T-cell (primary cell): ENCODE measurements at regions of chr7 and their contacts with region 1.

Region 1: DNA sequence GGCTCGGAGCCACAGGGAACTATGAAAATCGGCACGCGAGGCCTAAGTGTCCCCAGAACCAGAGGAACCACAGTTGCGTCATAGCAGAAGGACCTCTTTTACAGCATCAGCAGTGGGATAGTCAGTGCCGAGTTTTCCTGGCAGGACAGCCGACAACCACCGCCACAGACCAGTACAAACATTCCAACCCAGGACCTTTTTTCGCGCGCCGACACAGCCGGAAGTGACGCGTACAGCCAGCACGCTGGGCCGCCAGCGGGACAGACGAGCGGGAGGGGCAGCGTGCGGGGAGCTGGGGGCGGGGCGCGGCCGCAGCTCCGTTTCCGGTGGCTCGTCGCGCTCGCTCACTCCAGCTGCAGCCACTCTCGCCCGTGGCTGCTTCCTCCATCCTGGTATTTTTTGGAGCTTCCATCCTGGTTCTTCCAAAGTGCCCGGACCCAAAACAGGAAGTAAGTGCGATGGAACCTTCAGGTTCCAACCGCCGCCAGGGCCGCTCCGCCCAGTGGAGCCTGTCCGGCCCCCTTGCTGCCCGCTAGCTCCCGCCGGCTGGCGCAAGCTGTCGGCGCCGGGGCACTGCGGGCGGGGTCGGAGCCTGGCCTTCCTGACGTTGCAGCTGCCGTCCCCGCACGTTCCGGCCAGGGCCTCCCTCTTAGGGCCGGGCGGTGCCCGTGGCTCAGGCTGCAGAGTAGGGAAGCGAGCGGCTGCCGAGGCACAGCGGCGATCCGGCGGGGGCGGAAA is at the start of gene DMTF1:
- DNase-seq: peak; percentile 63 to 92 (median 81)
- ATAC-seq: peak; percentile 83 to 88 (median 84)
- H3K4me3 ChIP-seq: peak within 1 kb of the TSS; percentile 81 to 94
- H3K4me3 Mint-ChIP-seq: peak within 1 kb of the TSS; percentile 85 to 97 (median 92)
- H3K27ac ChIP-seq: peak within 1 kb of the TSS; percentile 90
- H3K27ac Mint-ChIP-seq: peak within 1 kb of the TSS; percentile 93 to 98
- H3K4me1 ChIP-seq: peaks cover 10 to 29% of the 10 kb centered on the region in 2 experiments
- H3K4me1 Mint-ChIP-seq: peaks cover 50 to 51% (median 50%) of the 10 kb centered on the region in 3 donors
- H3K27me3 ChIP-seq: no peaks in the 10 kb centered on the region
- H3K27me3 Mint-ChIP-seq: no peaks in the 10 kb centered on the region
- total RNA-seq, gene DMTF1: 128 to 176 (median 136) TPM

Region 2: DNA sequence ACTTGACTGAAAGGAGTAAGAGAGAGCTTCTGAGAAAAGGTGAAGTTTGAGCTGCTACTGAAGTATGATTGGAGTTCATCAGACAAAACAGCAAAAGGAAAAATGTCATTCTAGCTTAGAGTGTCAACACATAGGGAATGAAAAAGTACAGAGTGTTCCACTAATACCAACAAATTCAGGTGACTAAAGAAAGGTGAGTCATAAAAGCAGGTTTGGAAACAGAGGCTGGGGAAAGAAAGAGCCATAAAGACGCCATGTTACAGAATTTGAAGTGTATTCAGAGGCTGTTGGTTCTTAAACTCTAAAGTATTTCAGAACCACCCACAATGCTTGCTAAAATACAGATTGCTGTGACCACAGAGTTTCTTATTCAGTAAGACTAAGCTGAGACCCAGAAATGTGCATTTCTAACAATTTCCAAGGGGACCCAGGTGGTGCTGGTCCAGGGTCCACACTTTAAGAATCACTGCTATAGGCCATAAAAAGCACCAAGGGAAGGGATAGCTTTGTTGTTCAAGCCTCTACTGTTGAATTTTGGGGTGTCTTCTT is 235.9 kb before region 1 on chr7:
- CTCF ChIA-PET with region 1: interaction called in 1 of 2 experiments, 12 read pairs
- POLR2A ChIA-PET with region 1: no interaction called
- DNase-seq: no peak
- ATAC-seq: no peak
- H3K4me3 ChIP-seq: no peak overlapping the region
- H3K4me3 Mint-ChIP-seq: no peak overlapping the region
- H3K27ac ChIP-seq: no peak overlapping the region
- H3K27ac Mint-ChIP-seq: no peak overlapping the region
- H3K4me1 ChIP-seq: no peaks in the 10 kb centered on the region
- H3K4me1 Mint-ChIP-seq: no peaks in the 10 kb centered on the region
- H3K27me3 ChIP-seq: no peaks in the 10 kb centered on the region
- H3K27me3 Mint-ChIP-seq: peaks cover 1 to 12% of the 10 kb centered on the region in 2 donors

Region 3: DNA sequence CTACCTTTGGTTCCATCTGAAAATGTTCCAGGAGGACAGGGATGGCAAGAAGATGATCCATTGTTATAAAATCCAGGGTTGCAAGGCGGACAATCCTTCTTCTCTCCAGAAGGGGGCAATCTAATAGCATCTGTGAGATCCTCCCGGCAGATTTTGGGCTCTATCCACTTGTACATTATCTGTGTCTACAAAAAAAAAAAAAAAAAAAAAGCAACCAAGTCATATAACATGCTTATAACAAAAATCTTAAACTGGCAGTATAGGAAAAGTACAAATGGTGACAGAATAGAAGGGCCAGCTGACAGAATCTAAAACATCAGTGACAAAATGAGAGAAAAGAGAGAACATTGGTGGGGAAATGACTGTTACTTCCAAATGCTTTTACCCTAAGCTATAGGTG is 225.5 kb before region 1 on chr7:
- CTCF ChIA-PET with region 1: interaction called, 11 to 21 read pairs
- POLR2A ChIA-PET with region 1: interaction called, 3 to 4 read pairs
- DNase-seq: peak in 21 of 35 experiments; percentile 5 to 67 (median 15)
- ATAC-seq: peak; percentile 47 to 69 (median 56)
- H3K4me3 ChIP-seq: no peak overlapping the region
- H3K4me3 Mint-ChIP-seq: no peak overlapping the region
- H3K27ac ChIP-seq: no peak overlapping the region
- H3K27ac Mint-ChIP-seq: no peak overlapping the region
- H3K4me1 ChIP-seq: no peaks in the 10 kb centered on the region
- H3K4me1 Mint-ChIP-seq: peaks cover 0 to 2% (median 0%) of the 10 kb centered on the region in 3 donors
- H3K27me3 ChIP-seq: no peaks in the 10 kb centered on the region
- H3K27me3 Mint-ChIP-seq: peaks cover 3 to 4% of the 10 kb centered on the region in 2 donors

Region 4: GRCh38 chr7:87219545-87220025 is 67.3 kb after region 1 on chr7 and contains the start of gene TMEM243:
- CTCF ChIA-PET with region 1: interaction called in 1 of 2 experiments, 18 read pairs
- POLR2A ChIA-PET with region 1: interaction called, 6 to 41 read pairs
- DNase-seq: peak; percentile 67 to 93 (median 84)
- ATAC-seq: peak; percentile 70 to 82 (median 80)
- H3K4me3 ChIP-seq: peak within 1 kb of the TSS; percentile 85 to 94
- H3K4me3 Mint-ChIP-seq: peak within 1 kb of the TSS; percentile 98 to 100 (median 100)
- H3K27ac ChIP-seq: peak within 1 kb of the TSS; percentile 89
- H3K27ac Mint-ChIP-seq: peak within 1 kb of the TSS; percentile 98 to 100
- H3K4me1 ChIP-seq: peaks cover 31 to 43% of the 10 kb centered on the region in 2 experiments
- H3K4me1 Mint-ChIP-seq: peaks cover 43 to 55% (median 46%) of the 10 kb centered on the region in 3 donors
- H3K27me3 ChIP-seq: peaks cover 2 to 4% of the 10 kb centered on the region in 2 experiments
- H3K27me3 Mint-ChIP-seq: no peaks in the 10 kb centered on the region
- total RNA-seq, gene TMEM243: 95.2 to 170 (median 108) TPM

Region 5: DNA sequence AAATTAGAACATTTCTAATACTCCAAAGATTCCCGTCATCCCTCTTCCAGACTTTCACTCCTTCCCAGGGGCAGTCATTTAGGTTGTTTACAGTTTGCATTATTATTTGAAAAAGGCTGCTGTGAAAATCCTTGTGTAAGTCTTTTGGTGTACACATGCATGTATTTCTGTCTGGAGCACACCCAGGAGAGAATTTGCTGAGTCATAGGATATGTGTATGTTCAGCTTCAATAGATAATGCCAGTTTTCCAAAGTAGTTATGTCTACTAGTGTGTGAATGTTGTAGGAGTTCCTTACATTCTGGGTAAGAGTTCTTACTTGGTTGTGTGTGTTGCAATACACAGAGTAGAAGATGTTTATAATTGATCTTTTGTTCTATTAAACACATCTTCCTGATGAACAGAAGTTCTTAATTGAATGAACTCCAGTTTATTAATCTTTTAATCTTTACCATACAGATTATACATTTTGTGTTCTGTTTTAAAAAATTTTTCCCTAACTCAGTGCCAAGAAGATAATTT is 218.4 kb after region 1 on chr7:
- CTCF ChIA-PET with region 1: no interaction called
- POLR2A ChIA-PET with region 1: no interaction called
- DNase-seq: no peak
- ATAC-seq: no peak
- H3K4me3 ChIP-seq: no peak overlapping the region
- H3K4me3 Mint-ChIP-seq: no peak overlapping the region
- H3K27ac ChIP-seq: no peak overlapping the region
- H3K27ac Mint-ChIP-seq: no peak overlapping the region
- H3K4me1 ChIP-seq: peaks cover 3 to 6% of the 10 kb centered on the region in 2 experiments
- H3K4me1 Mint-ChIP-seq: peaks cover 4 to 11% (median 4%) of the 10 kb centered on the region in 3 donors
- H3K27me3 ChIP-seq: no peaks in the 10 kb centered on the region
- H3K27me3 Mint-ChIP-seq: no peaks in the 10 kb centered on the region